Activated B cell treated with CpG ODN at 0.5 μM for 24 hours (primary cell): ENCODE measurements at regions of chr7 and their contacts with region 1.

Region 1: GRCh38 chr7:111041577-111041976 is 49.4 kb upstream of the LRRN3 start:
- DNase-seq: no peak
- ATAC-seq: no peak
- H3K4me3 Mint-ChIP-seq: no peak overlapping the region
- H3K27ac Mint-ChIP-seq: no peak overlapping the region
- H3K4me1 Mint-ChIP-seq: no peaks in the 10 kb centered on the region
- H3K27me3 Mint-ChIP-seq: no peaks in the 10 kb centered on the region
- CTCF ChIP-seq: no peak

Region 2: GRCh38 chr7:111059833-111060232 is 18.3 kb after region 1 on chr7:
- CTCF ChIA-PET with region 1: no interaction called
- POLR2A ChIA-PET with region 1: no interaction called
- intact Hi-C with region 1: loop called (anchors 2 kb)
- DNase-seq: no peak
- ATAC-seq: no peak
- H3K4me3 Mint-ChIP-seq: no peak overlapping the region
- H3K27ac Mint-ChIP-seq: no peak overlapping the region
- H3K4me1 Mint-ChIP-seq: peaks cover 5% of the 10 kb centered on the region
- H3K27me3 Mint-ChIP-seq: no peaks in the 10 kb centered on the region
- CTCF ChIP-seq: no peak